ENCODE measurements at regions of chr2 and their contacts with region 1.

Region 1: GRCh38 chr2:101597351-101597944 is 100.1 kb upstream of the MAP4K4 start:
- DNase-seq: peak; percentile 62
- H3K4me3 ChIP-seq: no peak overlapping the region
- CTCF ChIP-seq: no peak

Region 2: DNA sequence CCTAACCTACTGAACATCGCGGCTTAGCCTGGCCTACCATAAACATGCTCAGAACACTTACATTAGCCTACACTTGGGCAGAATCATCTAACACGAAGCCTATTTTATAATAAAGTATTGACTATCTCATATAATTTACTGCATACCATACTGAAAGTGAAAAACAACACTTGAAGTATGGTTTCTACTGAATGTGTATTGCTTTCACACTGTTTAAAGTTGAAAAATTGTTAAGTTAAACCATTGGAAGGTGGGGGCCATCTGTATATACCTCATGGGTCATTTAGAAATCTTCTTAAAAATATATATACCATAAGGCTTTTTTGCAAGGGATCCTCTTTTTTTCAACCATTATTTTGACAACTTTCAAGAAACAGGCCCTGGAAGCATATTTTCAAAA is 305.5 kb before region 1 on chr2:
- in situ Hi-C with region 1: no loop called
- DNase-seq: no peak
- H3K4me3 ChIP-seq: no peak overlapping the region
- CTCF ChIP-seq: no peak

Region 3: DNA sequence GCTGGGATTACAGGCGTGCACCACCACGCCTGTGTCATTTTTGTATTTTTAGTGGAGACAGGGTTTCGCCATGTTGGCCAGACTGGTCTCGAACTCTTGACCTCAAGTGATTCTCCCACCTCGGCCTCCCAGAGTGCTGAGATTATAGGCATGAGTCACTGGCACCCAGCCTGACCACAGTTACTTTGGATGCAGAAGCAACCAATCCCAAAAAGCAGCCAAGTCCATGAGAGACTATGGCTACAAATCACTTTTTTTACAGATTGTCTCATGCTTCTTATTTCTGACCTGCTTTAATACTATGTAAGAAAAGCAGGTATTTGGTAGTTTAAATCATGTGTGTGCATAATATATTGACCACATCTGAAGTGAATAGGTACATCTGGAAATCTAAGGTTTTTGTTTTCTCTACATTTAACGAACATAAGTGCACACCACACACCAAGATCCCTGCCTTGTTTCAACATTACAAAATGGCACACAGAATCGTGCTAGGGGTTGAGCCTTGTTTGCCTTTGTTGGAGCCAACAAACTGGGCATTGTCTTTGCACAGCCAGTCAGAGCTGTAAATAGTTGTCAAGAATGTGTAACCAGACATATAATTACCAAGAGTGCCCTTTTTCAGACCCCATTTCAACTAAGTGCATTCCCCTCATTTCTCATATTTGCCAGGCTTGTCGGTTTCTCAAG is 81.7 kb after region 1 on chr2:
- in situ Hi-C with region 1: loop called (anchors 5 kb)
- DNase-seq: peak; percentile 89
- H3K4me3 ChIP-seq: no peak overlapping the region
- CTCF ChIP-seq: no peak

Measured in astrocyte of the cerebellum (primary cell).